Psoas muscle (tissue), 8 donors: ENCODE measurements at regions of chr1 and their contacts with region 1.

Region 1: GRCh38 chr1:168643152-168643551 is 66.7 kb downstream of the XCL1 start:
- DNase-seq: no peak
- ATAC-seq: no peak
- H3K4me3 ChIP-seq: no peak overlapping the region
- H3K27ac ChIP-seq: no peak overlapping the region
- H3K4me1 ChIP-seq: no peaks in the 10 kb centered on the region
- H3K27me3 ChIP-seq: no peaks in the 10 kb centered on the region
- CTCF ChIP-seq: no peak

Region 2: DNA sequence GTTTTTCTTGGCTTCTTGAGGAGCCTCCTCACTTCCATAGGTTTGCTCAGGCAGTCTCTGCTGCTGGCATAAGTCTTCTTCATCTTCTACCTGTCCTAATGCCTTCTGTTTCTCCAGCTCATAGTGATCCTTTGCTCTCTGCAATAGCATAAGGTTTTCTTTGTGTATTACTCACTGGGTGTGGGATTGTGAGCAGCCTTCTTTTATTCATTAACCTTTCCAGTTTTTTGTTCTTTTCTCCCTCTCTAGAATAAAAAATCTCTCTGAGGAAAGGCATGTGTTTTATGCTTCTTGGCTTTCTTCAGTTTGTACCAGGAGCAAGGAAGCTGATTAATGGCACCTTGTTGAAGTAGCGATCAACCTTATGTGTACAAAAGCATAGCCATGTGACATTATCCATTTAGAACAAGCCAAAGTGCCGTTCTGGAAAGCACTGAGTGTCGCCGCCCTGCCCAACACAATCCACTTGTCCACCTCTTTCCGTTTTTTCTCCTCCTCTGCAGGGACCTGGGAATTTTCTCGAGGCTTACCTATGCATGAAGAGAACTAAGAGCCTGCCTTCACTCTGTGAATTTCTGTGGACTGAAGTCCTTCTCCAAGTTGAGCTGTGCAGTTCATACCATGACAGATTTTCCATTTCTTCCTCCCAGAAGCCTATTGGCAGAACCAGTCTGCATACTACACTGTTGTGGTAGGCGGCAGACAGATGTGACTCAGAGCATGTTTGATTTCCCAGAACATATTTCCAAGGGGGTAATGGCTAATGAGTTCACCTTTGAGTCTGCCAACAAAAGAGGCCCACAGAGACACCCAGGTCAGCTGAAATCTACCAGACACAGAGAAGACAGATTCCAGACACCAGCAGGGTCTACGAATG is 46.8 kb after region 1 on chr1:
- intact Hi-C with region 1: loop called in 1 of 2 experiments (anchors 10 kb)
- DNase-seq: no peak
- ATAC-seq: peak in 2 of 4 donors; percentile 36 to 42
- H3K4me3 ChIP-seq: no peak overlapping the region
- H3K27ac ChIP-seq: no peak overlapping the region
- H3K4me1 ChIP-seq: no peaks in the 10 kb centered on the region
- H3K27me3 ChIP-seq: no peaks in the 10 kb centered on the region
- CTCF ChIP-seq: no peak

Region 3: DNA sequence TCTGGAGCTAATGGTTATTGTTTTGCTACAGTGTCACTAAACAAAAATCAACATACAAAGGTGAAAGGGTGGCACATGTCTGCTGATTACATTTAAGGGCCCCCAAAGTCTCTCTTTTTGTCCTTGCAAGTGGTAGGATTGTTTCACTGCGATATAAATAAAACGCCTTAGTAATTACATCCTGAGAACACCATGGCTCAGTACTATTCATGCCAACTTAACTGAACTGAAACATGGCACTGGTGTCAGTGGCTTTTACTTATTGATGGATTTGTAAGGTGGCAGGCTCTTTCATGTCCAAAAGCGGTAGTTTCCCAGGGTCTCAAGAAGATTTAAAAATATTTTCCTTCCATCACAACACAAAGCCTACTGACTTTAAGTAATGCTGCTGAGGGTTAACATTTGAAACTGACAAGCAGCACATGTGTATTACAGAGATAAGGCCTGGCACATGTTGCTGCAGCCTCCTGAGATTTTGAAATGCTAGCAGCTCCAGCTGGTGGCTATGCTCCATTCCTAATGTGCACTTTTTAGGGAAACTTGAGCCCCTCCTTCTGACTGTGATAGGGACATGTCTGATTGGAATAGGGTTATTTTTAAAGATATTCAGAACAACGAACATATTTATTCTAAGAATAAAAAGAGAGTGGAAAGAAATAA is 550.2 kb after region 1 on chr1:
- intact Hi-C with region 1: no loop called
- DNase-seq: peak in 1 of 2 donors; percentile 9
- ATAC-seq: peak; percentile 87 to 95 (median 92)
- H3K4me3 ChIP-seq: peak overlapping the region; percentile 6
- H3K27ac ChIP-seq: peak overlapping the region; percentile 74
- H3K4me1 ChIP-seq: peaks cover 7% of the 10 kb centered on the region
- H3K27me3 ChIP-seq: no peaks in the 10 kb centered on the region
- CTCF ChIP-seq: no peak